Activated T-helper 2 cell treated with anti-CD3 and anti-CD28 coated beads, Interferon-gamma antibody, Interleukin-2, Interleukin-4, amounts not matched to agents 10 μg/mL and 5 μg/mL and 100 μg/mL, durations not matched to agents 14 hours and 24 hours and 36 hours (primary cell): ENCODE measurements at regions of chr10 and their contacts with region 1.

Region 1: DNA sequence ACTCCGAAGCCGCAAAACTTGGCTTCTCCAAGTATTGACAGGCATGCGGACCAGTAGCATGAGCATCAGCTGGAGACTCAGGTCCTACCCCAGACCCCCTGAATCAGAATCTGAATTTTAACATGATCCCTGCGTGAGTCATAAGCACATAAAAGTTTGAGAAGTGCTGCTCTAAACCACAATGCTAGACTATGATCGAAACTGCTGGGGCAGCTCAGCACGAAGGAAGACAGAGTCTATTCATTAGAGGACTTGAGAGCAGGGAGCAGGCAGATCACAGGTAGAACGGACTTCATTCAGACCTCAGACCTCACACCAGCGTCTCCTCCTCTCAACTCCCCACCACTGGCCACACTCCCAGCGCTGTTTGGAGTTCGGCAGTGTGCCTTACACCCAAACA is 16.9 kb downstream of the CAMK2G start:
- DNase-seq: peak; percentile 37
- H3K4me3 Mint-ChIP-seq: peak overlapping the region; percentile 41
- H3K27ac Mint-ChIP-seq: peak overlapping the region; percentile 83
- H3K4me1 Mint-ChIP-seq: peaks cover 53% of the 10 kb centered on the region
- H3K27me3 Mint-ChIP-seq: no peaks in the 10 kb centered on the region

Region 2: GRCh38 chr10:73609116-73609515 is 248.3 kb before region 1 on chr10:
- intact Hi-C with region 1: no loop called
- DNase-seq: no peak
- H3K4me3 Mint-ChIP-seq: no peak overlapping the region
- H3K27ac Mint-ChIP-seq: no peak overlapping the region
- H3K4me1 Mint-ChIP-seq: no peaks in the 10 kb centered on the region
- H3K27me3 Mint-ChIP-seq: no peaks in the 10 kb centered on the region

Region 3: GRCh38 chr10:73874267-73875138 is 17.1 kb after region 1 on chr10 and contains the start of gene CAMK2G:
- intact Hi-C with region 1: loop called (anchors 2 kb)
- DNase-seq: peak; percentile 81
- H3K4me3 Mint-ChIP-seq: peak within 1 kb of the TSS; percentile 87
- H3K27ac Mint-ChIP-seq: peak within 1 kb of the TSS; percentile 84
- H3K4me1 Mint-ChIP-seq: peaks cover 48% of the 10 kb centered on the region
- H3K27me3 Mint-ChIP-seq: no peaks in the 10 kb centered on the region
- total RNA-seq, gene CAMK2G: 25.8 and 26.4 TPM in 2 replicates